Mucosa of descending colon (tissue), 3 donors: ENCODE measurements at regions of chr15 and their contacts with region 1.

Region 1: GRCh38 chr15:67863442-67863987 is 23.7 kb upstream of the RNU6-1 start:
- DNase-seq: peak; percentile 79 to 87 (median 85)
- ATAC-seq: peak; percentile 99
- H3K4me3 ChIP-seq: no peak overlapping the region
- H3K4me1 ChIP-seq: no peaks in the 10 kb centered on the region
- CTCF ChIP-seq: peak; percentile 76

Region 2: DNA sequence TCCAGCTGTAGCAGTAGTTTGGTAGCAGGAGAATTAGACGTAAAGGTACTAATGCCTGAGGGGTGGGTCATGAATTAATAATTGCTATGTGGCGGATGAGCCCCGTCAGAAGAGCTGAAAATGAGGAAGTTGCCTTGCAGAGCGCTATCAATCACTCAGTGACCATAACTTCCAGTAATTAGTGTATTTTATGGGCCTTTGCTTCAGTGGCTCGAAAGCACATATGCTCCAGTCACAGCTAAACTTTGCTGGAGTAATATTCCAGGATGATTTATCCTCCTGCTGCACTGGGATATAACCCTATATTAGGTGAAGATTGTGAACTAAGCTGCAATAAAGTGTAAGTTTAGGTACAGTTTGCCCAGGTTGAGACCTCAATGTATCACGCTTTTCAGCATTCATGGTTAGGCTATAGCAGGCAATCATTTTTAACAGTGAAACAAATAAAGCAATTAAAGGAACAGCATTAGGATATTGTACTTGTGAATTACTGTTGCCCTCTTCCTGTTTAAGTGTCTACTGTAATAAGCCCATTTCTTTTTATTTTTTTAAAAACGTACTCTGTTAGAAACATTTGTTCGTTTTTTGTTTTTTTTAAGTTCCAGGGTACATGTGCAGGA is 142.8 kb before region 1 on chr15:
- intact Hi-C with region 1: no loop called
- DNase-seq: no peak
- ATAC-seq: peak; percentile 76
- H3K4me3 ChIP-seq: no peak overlapping the region
- H3K4me1 ChIP-seq: no peaks in the 10 kb centered on the region
- CTCF ChIP-seq: no peak

Region 3: DNA sequence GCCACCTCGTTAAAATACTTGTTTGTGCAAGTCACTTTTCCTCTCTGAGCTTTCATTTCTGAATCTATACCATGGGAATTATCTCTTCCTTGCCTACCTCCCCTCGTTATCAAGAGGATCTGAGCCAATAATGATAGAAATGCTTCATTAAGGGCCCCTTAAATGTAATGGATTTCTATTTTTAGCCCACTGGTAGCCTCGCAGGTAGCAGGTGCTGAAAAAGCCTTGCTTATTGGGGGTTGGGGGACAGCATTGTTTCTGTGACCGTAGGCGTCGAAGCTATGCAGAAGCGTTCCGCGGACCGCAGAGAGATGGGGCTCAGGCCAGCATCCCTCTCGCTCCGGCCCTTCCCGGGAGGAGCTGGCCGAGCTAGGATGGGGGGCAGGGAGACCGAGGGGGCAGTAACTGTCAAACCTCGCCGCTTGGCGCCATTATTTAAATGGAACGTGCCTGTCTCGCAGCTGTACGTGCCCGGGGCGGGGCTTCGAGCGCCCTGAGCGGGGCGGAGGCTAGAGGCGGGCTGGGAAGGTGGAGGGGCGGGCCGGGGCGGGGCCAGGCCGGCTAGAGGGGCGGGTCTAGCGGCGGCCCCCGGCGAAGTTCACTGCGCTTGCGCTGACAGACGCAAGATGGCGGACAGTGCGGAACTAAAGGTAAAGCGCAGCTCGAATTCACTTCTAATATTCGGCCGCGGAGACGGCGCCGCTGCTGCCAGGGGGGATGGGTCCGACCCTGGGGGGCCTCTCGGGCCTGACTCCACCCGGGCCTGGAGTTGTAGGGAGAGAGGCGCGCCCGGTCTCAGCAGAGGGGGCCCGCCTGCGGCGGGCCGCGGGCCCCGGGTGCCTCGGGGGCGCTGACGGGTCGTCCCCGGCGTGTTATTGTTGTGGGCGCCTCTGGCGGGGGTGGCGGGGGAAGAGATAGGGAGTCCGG is 190.4 kb after region 1 on chr15 and contains the start of gene PIAS1:
- intact Hi-C with region 1: loop called in 1 of 2 experiments (anchors 10 kb)
- DNase-seq: peak; percentile 96 to 97 (median 96)
- ATAC-seq: peak; percentile 97
- H3K4me3 ChIP-seq: peak within 1 kb of the TSS; percentile 94
- H3K4me1 ChIP-seq: peaks cover 6% of the 10 kb centered on the region
- CTCF ChIP-seq: no peak
- total RNA-seq, gene PIAS1: 35.4 to 59.3 (median 37.7) TPM

Region 4: DNA sequence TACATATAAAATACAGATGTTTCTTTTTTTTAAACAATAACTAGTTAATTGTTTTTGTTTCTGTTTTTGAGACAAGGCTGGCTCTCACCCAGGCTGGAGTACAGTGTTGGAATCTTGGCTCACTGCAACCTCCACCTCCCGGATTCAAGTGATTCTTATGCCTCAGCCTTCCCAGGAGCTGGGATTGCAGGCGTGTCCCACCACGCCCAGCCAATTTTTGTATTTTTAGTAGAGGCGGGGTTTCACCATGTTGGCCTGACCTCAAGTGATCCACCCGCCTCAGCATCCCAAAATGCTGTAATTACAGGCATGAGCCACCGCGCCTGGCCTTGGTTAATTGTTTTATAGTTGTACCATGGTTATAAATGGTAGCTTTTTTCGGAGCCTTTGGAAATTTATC is 262.9 kb after region 1 on chr15:
- intact Hi-C with region 1: no loop called
- DNase-seq: peak; percentile 55 to 67 (median 61)
- ATAC-seq: peak; percentile 80
- H3K4me3 ChIP-seq: no peak overlapping the region
- H3K4me1 ChIP-seq: peaks cover 15% of the 10 kb centered on the region
- CTCF ChIP-seq: no peak

Region 5: GRCh38 chr15:68154923-68155559 is 291.5 kb after region 1 on chr15:
- intact Hi-C with region 1: loop called (anchors 5 to 10 kb)
- DNase-seq: peak in 1 of 3 donors; percentile 76
- ATAC-seq: peak; percentile 63
- H3K4me3 ChIP-seq: no peak overlapping the region
- H3K4me1 ChIP-seq: no peaks in the 10 kb centered on the region
- CTCF ChIP-seq: peak; percentile 50

Region 6: GRCh38 chr15:68218847-68219798 is 355.6 kb after region 1 on chr15:
- intact Hi-C with region 1: loop called in 1 of 2 experiments (anchors 5 kb)
- DNase-seq: no peak
- ATAC-seq: no peak
- H3K4me3 ChIP-seq: no peak overlapping the region
- H3K4me1 ChIP-seq: no peaks in the 10 kb centered on the region
- CTCF ChIP-seq: no peak